SK-N-SH (cell line): ENCODE measurements at regions of chr20 and their contacts with region 1.

Region 1: DNA sequence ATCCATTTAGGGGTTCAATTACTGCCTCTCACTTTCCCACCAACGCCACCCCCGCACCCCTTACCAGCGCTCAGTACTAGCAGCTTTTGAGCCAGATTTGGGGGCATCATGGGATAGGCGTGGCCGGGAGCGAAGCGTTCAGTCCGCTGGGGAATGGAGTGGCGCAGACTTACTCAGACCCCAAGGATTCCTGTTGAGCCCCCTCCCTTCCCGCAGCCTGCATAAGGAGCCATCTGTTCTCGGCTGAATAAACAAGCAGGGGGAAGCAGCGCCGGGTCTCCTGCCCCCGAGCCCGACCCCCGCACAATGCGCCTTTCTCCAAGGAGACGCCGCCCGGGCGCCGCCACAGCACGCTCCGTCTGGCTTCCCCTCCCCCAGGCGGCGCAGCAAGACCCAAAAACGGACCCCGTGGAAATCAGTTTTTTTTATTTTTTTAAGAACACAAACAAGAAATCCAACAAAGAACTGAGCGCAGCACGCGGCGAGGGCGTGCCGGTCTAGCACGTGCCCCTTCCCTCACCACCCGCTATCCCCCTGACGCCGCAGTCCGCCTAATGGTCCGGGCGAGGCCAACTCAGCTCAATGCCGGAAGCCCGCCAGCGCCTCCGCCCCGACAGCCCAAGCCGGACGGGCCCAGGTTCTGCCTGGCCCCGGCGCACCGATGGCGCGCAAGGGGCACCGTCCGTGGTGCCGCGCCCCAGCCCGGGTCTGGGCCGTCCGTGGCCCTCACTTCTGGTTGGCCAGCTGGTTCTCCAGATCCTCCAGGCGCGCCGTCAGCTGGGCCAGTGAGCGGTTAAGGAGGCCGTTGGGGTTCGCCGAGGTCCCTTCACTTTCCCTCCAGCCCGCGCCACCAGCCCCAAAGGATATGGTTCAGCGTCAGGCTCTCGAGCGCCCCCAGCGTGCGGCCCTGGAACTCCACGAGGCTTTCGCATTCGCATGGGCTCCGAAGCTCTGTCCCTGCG is 13.3 kb upstream of the RBPJL start:
- DNase-seq: peak; percentile 92
- H3K4me3 ChIP-seq: peak overlapping the region; percentile 46 to 72
- H3K27ac ChIP-seq: no peak overlapping the region
- H3K4me1 ChIP-seq: peaks cover 0 to 3% of the 10 kb centered on the region in 2 experiments; a peak in 1 of 4 replicates
- H3K27me3 ChIP-seq: no peaks in the 10 kb centered on the region
- CTCF ChIP-seq: peak; percentile 83
- EP300 ChIP-seq: no peak
- RAD21 ChIP-seq: peak; percentile 31

Region 2: GRCh38 chr20:45011108-45011526 is 282.2 kb before region 1 on chr20:
- CTCF ChIA-PET with region 1: interaction called, 51 read pairs
- POLR2A ChIA-PET with region 1: no interaction called
- DNase-seq: peak; percentile 57
- H3K4me3 ChIP-seq: peak overlapping the region in 1 of 2 experiments; percentile 33; a peak in 1 of 4 replicates
- H3K27ac ChIP-seq: peak overlapping the region; percentile 51 to 96; a peak in 3 of 4 replicates
- H3K4me1 ChIP-seq: peaks cover 15 to 31% of the 10 kb centered on the region in 2 experiments
- H3K27me3 ChIP-seq: no peaks in the 10 kb centered on the region
- CTCF ChIP-seq: peak; percentile 96
- EP300 ChIP-seq: no peak
- RAD21 ChIP-seq: peak; percentile 82

Region 3: GRCh38 chr20:45044084-45044573 is 249.2 kb before region 1 on chr20:
- CTCF ChIA-PET with region 1: interaction called, 86 read pairs
- POLR2A ChIA-PET with region 1: no interaction called
- DNase-seq: peak; percentile 36
- H3K4me3 ChIP-seq: no peak overlapping the region; a peak in 1 of 4 replicates
- H3K27ac ChIP-seq: peak overlapping the region in 1 of 2 experiments; percentile 63; a peak in 2 of 4 replicates
- H3K4me1 ChIP-seq: peaks cover 0 to 29% of the 10 kb centered on the region in 2 experiments; a peak in 2 of 4 replicates
- H3K27me3 ChIP-seq: no peaks in the 10 kb centered on the region
- CTCF ChIP-seq: peak; percentile 96
- EP300 ChIP-seq: no peak
- RAD21 ChIP-seq: peak; percentile 91

Region 4: GRCh38 chr20:45095753-45096371 is 197.5 kb before region 1 on chr20:
- CTCF ChIA-PET with region 1: interaction called, 113 read pairs
- POLR2A ChIA-PET with region 1: no interaction called
- DNase-seq: peak; percentile 66
- H3K4me3 ChIP-seq: no peak overlapping the region
- H3K27ac ChIP-seq: no peak overlapping the region
- H3K4me1 ChIP-seq: peaks cover 0 to 4% of the 10 kb centered on the region in 2 experiments; a peak in 1 of 4 replicates
- H3K27me3 ChIP-seq: no peaks in the 10 kb centered on the region
- CTCF ChIP-seq: peak; percentile 77
- EP300 ChIP-seq: no peak; a peak in 1 of 4 replicates
- RAD21 ChIP-seq: peak; percentile 78

Region 5: DNA sequence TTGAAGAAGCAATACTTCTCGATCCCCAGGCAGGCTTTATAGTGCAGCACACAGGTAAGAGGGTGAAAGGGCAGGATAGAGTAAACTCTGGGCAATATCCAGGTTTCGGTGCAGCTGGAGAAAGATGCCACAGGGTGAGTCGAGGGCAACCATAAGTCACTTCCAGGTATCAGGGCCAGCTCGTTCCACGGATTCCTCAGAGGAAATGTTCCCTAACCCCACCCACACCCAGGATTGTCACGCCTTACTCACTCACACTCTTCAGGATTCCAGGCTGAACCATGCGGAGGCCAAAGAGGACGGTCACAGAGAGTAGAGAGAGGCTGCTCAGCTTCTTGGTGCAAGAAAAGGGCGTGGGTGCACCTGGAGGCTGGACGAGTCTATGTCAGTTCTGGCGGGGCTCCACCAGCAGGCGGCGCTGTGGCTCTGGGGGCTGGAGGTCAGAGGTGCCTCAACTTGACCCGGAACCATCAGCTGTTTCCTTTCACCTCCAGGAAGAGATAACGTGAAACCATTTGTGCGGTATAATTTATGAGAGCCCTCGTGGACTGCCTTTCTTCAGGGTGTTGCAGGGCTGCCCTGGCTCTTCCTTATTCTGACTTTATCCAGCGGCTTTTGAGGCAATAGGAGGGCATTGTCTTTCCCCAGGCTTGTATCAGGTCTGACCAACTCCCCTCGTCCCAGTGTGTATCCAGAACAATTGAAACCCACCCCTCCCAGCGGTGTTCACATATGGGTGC is 154.6 kb before region 1 on chr20:
- CTCF ChIA-PET with region 1: interaction called, 16 read pairs
- POLR2A ChIA-PET with region 1: no interaction called
- DNase-seq: peak; percentile 39
- H3K4me3 ChIP-seq: peak overlapping the region in 1 of 2 experiments; percentile 23; a peak in 1 of 4 replicates
- H3K27ac ChIP-seq: no peak overlapping the region
- H3K4me1 ChIP-seq: no peaks in the 10 kb centered on the region
- H3K27me3 ChIP-seq: peaks cover 18% of the 10 kb centered on the region; the same call in 1 of the 2 replicates
- CTCF ChIP-seq: peak; percentile 60
- EP300 ChIP-seq: no peak
- RAD21 ChIP-seq: peak; percentile 42

Region 6: GRCh38 chr20:45275338-45275737 is 18.0 kb before region 1 on chr20:
- CTCF ChIA-PET with region 1: interaction called, 48 read pairs
- POLR2A ChIA-PET with region 1: no interaction called
- DNase-seq: no peak
- H3K4me3 ChIP-seq: no peak overlapping the region
- H3K27ac ChIP-seq: no peak overlapping the region
- H3K4me1 ChIP-seq: no peaks in the 10 kb centered on the region
- H3K27me3 ChIP-seq: peaks cover 17% of the 10 kb centered on the region; the same call in 1 of the 2 replicates
- CTCF ChIP-seq: no peak
- EP300 ChIP-seq: no peak
- RAD21 ChIP-seq: no peak